ENCODE measurements at regions of chr2 and their contacts with region 1.

Region 1: GRCh38 chr2:30393510-30393909 is 53.5 kb upstream of the LCLAT1 start:
- DNase-seq: no peak
- ATAC-seq: no peak
- H3K4me3 ChIP-seq: no peak overlapping the region
- H3K27ac ChIP-seq: no peak overlapping the region
- H3K4me1 ChIP-seq: no peaks in the 10 kb centered on the region
- H3K27me3 ChIP-seq: no peaks in the 10 kb centered on the region
- CTCF ChIP-seq: no peak

Region 2: GRCh38 chr2:30447149-30448045 is 53.9 kb after region 1 on chr2 and contains the start of gene LCLAT1:
- intact Hi-C with region 1: loop called in 1 of 10 experiments (anchors 2 kb)
- DNase-seq: peak; percentile 87
- ATAC-seq: peak; percentile 95 to 99 (median 98)
- H3K4me3 ChIP-seq: peak within 1 kb of the TSS; percentile 79 to 99 (median 90)
- H3K27ac ChIP-seq: peak within 1 kb of the TSS; percentile 44 to 92 (median 87)
- H3K4me1 ChIP-seq: peaks cover 4 to 32% (median 21%) of the 10 kb centered on the region in 9 donors
- H3K27me3 ChIP-seq: no peaks in the 10 kb centered on the region
- CTCF ChIP-seq: peak in 3 of 9 donors; percentile 13 to 33 (median 22)
- total RNA-seq, gene LCLAT1: 26.6 to 56.4 (median 44.9) TPM

Measured in heart right ventricle (tissue), 16 donors.